Gastrocnemius medialis (tissue), 4 donors: ENCODE measurements at regions of chr2 and their contacts with region 1.

Region 1: GRCh38 chr2:187499941-187500532 is 52.0 kb upstream of the CALCRL start:
- DNase-seq: peak in 1 of 2 donors; percentile 52
- ATAC-seq: peak; percentile 58 to 81
- H3K4me3 ChIP-seq: no peak overlapping the region
- H3K27ac ChIP-seq: no peak overlapping the region
- H3K4me1 ChIP-seq: peaks cover 0 to 6% of the 10 kb centered on the region in 2 donors
- H3K27me3 ChIP-seq: no peaks in the 10 kb centered on the region
- CTCF ChIP-seq: peak; percentile 71 to 91 (median 81)
- POLR2A ChIP-seq: no peak

Region 2: GRCh38 chr2:187519419-187520120 is 19.5 kb after region 1 on chr2:
- in situ Hi-C with region 1: no loop called
- intact Hi-C with region 1: no loop called
- DNase-seq: no peak
- ATAC-seq: no peak
- H3K4me3 ChIP-seq: no peak overlapping the region
- H3K27ac ChIP-seq: no peak overlapping the region
- H3K4me1 ChIP-seq: no peaks in the 10 kb centered on the region
- H3K27me3 ChIP-seq: no peaks in the 10 kb centered on the region
- CTCF ChIP-seq: no peak
- POLR2A ChIP-seq: no peak

Region 3: DNA sequence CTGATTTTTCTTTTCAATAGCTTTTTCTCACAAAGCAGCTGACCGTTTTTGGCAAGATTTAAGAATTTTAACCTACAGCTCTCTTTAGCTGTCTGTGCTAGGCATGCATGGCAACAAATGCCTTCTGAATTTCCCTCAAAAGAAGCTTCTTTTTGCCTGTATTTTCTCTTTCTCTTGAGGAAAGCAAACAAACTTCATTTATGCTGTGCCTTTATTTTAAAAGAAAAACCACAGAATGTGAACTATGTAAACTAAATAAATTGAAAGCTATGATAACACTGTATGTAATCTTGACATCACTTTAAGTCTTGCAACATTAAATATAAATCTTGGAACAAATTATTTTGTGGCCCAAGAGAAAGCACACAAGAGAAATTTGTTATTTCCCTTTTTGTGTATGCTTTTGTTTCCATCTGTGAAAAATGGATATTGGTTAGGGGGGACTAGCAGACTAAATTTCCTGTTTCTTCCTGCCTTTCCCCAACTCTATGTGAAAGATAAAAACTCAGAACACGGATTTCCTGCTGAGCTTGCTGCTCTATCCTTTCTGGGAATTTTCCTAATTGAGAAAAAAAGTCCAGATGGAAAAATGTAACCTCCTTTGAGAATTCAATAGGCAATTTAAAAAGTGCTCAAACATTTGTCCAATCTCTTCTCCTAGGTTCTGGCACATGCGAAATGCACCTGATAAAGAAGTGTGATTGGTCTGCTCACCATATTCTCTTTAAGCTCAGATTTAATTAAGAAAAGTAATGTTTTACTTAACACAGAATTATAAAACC is 75.1 kb after region 1 on chr2:
- in situ Hi-C with region 1: loop called (anchors 5 kb)
- intact Hi-C with region 1: loop called (anchors 1 kb)
- DNase-seq: no peak
- ATAC-seq: no peak
- H3K4me3 ChIP-seq: no peak overlapping the region
- H3K27ac ChIP-seq: peak overlapping the region in 1 of 4 donors; percentile 3
- H3K4me1 ChIP-seq: no peaks in the 10 kb centered on the region
- H3K27me3 ChIP-seq: no peaks in the 10 kb centered on the region
- CTCF ChIP-seq: no peak
- POLR2A ChIP-seq: no peak

Region 4: GRCh38 chr2:187842978-187843847 is 343.2 kb after region 1 on chr2:
- in situ Hi-C with region 1: loop called in 3 of 4 experiments (anchors 10 to 25 kb)
- intact Hi-C with region 1: loop called (anchors 5 kb)
- DNase-seq: no peak
- ATAC-seq: no peak
- H3K4me3 ChIP-seq: no peak overlapping the region
- H3K27ac ChIP-seq: no peak overlapping the region
- H3K4me1 ChIP-seq: no peaks in the 10 kb centered on the region
- H3K27me3 ChIP-seq: no peaks in the 10 kb centered on the region
- CTCF ChIP-seq: peak in 4 of 5 experiments; percentile 11 to 62 (median 32)
- POLR2A ChIP-seq: no peak